ENCODE measurements at regions of chr10 and their contacts with region 1.

Region 1: GRCh38 chr10:124632064-124632531 is 112.1 kb downstream of the FAM53B start:
- DNase-seq: peak; percentile 68 to 84 (median 76)
- H3K4me3 ChIP-seq: no peak overlapping the region
- H3K27ac ChIP-seq: peak overlapping the region; percentile 71 to 73
- H3K4me1 ChIP-seq: peaks cover 47% of the 10 kb centered on the region
- H3K27me3 ChIP-seq: no peaks in the 10 kb centered on the region
- CTCF ChIP-seq: peak; percentile 19 to 67 (median 34)
- EP300 ChIP-seq: no peak
- POLR2A ChIP-seq: no peak

Region 2: DNA sequence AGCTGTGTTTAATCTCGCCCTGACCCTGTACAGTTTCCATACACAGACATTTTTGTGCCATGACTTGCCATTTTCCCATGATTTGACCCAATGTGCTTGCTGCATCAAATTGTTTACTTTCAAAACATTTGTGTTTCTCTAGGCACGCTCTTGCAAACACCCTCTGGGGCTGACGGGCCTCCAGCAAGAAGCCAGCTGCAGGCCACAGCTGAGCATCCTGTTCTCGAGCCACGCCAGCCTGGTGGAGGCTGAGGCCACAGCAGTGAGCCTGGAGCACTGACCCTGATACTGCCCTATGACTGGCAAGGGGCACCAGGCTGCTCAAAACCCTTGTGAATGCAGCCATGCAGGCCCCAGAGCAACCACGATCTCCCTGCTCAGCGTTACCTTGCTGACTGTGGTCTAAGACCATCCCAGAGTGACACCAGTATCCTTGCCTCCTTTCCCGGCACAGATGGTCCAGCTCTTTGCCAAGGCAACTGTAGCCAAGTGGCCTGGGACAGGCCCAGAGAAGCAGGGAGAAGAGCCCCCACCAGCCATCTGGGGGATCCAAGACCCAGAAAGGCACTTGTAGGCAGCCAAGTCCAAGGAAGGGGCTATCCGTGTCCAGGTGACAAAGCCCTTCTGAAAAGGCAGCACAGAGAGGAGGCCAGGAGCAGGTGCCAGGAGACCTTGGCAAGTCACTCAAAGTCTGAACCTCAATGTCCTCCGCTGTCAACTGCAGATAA is 291.9 kb before region 1 on chr10:
- intact Hi-C with region 1: no loop called
- DNase-seq: peak in 3 of 5 donors; percentile 44 to 57 (median 54)
- H3K4me3 ChIP-seq: no peak overlapping the region
- H3K27ac ChIP-seq: no peak overlapping the region
- H3K4me1 ChIP-seq: peaks cover 9% of the 10 kb centered on the region
- H3K27me3 ChIP-seq: no peaks in the 10 kb centered on the region
- CTCF ChIP-seq: peak in 1 of 3 donors; percentile 13
- EP300 ChIP-seq: no peak
- POLR2A ChIP-seq: no peak

Region 3: DNA sequence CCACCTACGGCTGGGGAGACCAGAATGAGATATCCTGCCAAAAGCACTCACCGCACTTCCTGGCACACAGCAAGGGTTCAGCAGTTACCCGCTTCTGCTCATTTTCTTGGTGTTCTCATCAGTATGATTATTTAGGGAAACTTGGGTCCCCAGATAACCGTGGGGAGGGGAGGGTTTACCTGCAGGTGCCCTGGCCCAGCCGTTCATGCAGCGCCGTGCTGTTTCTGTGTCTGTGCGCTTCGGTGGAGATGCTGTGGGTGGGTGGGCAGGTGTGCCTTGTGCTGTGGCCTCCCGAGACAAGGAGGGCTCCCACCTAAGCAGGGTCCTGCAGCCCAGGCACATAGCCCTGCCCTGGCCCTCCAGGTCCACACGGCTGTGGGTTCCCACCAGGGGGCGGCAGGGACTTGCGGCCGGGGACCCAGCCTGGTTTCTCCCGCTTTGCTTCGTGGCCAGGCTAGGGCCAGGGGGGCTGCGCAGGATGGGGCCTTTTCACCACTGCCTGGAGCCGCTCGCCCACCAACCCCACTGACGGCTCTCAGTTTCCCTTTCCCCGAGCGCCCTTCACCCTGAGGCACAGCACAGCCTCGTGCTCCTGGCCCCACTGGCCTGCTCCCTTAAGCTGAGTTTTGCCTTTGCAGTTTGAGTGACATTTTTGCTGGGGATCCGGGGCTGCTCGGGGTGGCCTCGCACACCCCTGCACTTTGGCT is 92.0 kb before region 1 on chr10:
- intact Hi-C with region 1: loop called in 3 of 4 experiments (anchors 5 to 10 kb)
- DNase-seq: peak; percentile 67 to 84 (median 81)
- H3K4me3 ChIP-seq: no peak overlapping the region
- H3K27ac ChIP-seq: no peak overlapping the region
- H3K4me1 ChIP-seq: peaks cover 17% of the 10 kb centered on the region
- H3K27me3 ChIP-seq: no peaks in the 10 kb centered on the region
- CTCF ChIP-seq: peak; percentile 70 to 89 (median 86)
- EP300 ChIP-seq: no peak
- POLR2A ChIP-seq: no peak

Region 4: DNA sequence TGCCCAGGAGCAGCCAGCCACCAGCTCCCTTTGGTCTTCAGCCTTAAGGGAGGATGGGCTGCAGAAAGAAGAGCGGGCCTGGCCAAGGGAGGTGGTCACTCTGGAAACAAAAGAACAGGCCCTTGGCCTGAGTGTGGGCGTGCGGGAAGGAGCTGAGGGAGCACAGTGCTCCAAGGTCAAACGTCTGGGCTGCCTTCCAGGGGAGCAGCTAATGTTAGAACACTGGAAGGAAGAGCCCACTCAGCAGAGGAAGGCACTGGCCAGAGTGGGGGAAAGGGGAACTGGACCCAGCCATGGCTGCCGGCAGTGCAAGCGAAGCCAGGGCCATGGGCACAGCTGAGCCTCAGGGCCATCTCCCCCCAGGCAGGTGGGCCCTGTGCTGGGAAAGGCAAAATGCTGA is 69.3 kb after region 1 on chr10:
- intact Hi-C with region 1: loop called in 1 of 4 experiments (anchors 5 kb)
- DNase-seq: peak; percentile 98 to 100 (median 99)
- H3K4me3 ChIP-seq: no peak overlapping the region
- H3K27ac ChIP-seq: peak overlapping the region; percentile 74 to 96
- H3K4me1 ChIP-seq: peaks cover 72% of the 10 kb centered on the region
- H3K27me3 ChIP-seq: no peaks in the 10 kb centered on the region
- CTCF ChIP-seq: no peak
- EP300 ChIP-seq: no peak
- POLR2A ChIP-seq: no peak

Region 5: DNA sequence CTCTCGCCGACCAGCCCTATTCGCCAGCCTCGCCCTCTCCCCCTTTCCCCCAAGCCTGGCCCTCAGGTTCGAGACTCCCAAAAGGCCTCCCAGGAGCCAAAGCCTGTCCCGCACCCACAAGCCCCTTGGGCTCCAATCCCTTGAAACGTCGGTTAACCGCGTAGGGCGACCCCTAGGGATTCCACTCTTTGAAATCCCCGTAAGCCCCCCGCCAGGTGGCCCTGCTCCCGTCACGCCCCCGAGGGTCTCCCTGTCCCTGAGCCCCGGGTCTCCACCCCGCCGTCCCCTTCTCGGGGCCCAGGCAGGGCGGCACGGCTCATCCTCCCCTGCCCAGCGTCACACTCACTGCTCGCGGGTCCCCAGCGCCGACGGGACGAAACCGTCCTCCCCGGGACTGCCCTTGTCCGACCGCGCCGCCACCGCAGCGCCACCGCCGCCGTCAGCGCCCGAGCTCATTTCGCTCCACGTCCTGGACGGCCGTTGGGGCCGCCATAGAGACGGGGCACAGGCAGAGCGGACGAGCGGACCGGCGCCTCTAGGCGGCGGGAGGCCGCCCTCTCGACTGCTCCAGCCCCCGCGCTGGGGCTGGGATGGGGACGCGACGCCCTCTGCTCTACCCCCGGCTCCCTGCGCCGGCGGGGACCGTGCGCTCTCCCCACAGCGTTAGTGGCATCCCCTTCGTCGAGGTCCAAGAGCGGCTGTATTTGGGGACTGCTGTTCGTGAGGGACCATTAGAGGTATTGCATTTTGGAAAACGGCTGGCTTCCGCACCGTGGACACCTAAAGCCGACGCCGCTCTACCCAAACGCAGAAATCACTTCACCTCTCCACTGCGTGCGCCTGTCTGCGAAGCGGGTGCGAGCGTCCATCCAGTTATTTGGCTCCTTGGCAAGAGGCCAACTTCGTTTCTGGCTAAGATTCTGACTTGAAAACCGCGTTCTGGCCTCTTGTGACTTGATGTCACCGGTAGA is 159.6 kb after region 1 on chr10 and contains the start of gene EEF1AKMT2:
- intact Hi-C with region 1: loop called in 1 of 4 experiments (anchors 5 kb)
- DNase-seq: peak; percentile 76 to 91 (median 82)
- H3K4me3 ChIP-seq: peak within 1 kb of the TSS; percentile 97
- H3K27ac ChIP-seq: peak within 1 kb of the TSS; percentile 73 to 82
- H3K4me1 ChIP-seq: peaks cover 6% of the 10 kb centered on the region
- H3K27me3 ChIP-seq: no peaks in the 10 kb centered on the region
- CTCF ChIP-seq: peak; percentile 25 to 87 (median 70)
- EP300 ChIP-seq: no peak
- POLR2A ChIP-seq: peak; percentile 73
- total RNA-seq, gene EEF1AKMT2: 11.9 to 25.8 (median 20.7) TPM

Region 6: GRCh38 chr10:124860426-124860825 is 228.3 kb after region 1 on chr10:
- intact Hi-C with region 1: no loop called
- DNase-seq: no peak
- H3K4me3 ChIP-seq: no peak overlapping the region
- H3K27ac ChIP-seq: no peak overlapping the region
- H3K4me1 ChIP-seq: no peaks in the 10 kb centered on the region
- H3K27me3 ChIP-seq: no peaks in the 10 kb centered on the region
- CTCF ChIP-seq: no peak
- EP300 ChIP-seq: no peak
- POLR2A ChIP-seq: no peak